ENCODE measurements at regions of chr12 and their contacts with region 1.

Region 1: DNA sequence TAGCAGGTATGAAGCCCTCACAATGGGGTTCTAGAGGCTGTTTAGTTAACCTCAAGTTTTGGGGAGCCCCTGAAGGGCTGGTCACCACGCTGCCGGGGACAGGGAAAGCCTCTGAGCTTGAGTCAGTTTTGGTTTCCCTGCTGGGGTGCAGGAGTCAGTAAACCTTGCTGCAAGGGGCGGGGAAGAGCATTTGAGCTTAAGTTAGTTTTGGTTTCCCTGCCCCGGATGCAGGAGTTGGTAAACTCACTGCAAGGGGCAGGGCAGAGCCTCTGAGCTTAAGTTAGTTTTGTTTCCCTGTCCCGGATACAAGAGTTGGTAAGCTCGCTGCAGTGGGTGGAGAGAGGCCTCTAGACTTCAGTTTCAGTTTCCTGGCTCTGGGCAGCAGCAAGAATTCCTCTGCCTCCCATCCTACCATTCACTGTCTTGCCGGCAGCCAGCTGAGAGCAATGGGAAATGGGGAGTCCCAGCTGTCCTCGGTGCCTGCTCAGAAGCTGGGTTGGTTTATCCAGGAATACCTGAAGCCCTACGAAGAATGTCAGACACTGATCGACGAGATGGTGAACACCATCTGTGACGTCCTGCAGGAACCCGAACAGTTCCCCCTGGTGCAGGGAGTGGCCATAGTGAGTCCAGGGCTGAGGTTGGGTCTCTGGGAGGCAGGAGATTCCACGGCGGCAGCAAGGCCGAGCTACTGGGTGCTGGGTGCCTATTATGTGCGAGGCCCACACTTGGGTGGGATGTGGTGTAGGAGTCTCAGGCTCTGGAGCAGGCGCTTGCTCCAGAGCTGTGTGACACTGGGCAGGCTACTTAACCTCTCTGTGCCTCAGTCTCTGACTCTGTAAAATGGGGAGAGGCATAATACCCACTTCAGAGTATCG is at the start of gene OAS2:
- DNase-seq: peak; percentile 64 to 76 (median 70)
- ATAC-seq: peak; percentile 88 to 97 (median 94)
- H3K4me3 ChIP-seq: peak within 1 kb of the TSS; percentile 19 to 90 (median 64)
- H3K27ac ChIP-seq: peak within 1 kb of the TSS; percentile 54 to 98 (median 87)
- H3K4me1 ChIP-seq: peaks cover 0 to 40% (median 12%) of the 10 kb centered on the region in 12 donors
- H3K27me3 ChIP-seq: no peaks in the 10 kb centered on the region
- CTCF ChIP-seq: no peak
- POLR2A ChIP-seq: peak in 1 of 2 donors; percentile 54
- total RNA-seq, gene OAS2: 6.0 to 46.1 (median 9.8) TPM

Region 2: DNA sequence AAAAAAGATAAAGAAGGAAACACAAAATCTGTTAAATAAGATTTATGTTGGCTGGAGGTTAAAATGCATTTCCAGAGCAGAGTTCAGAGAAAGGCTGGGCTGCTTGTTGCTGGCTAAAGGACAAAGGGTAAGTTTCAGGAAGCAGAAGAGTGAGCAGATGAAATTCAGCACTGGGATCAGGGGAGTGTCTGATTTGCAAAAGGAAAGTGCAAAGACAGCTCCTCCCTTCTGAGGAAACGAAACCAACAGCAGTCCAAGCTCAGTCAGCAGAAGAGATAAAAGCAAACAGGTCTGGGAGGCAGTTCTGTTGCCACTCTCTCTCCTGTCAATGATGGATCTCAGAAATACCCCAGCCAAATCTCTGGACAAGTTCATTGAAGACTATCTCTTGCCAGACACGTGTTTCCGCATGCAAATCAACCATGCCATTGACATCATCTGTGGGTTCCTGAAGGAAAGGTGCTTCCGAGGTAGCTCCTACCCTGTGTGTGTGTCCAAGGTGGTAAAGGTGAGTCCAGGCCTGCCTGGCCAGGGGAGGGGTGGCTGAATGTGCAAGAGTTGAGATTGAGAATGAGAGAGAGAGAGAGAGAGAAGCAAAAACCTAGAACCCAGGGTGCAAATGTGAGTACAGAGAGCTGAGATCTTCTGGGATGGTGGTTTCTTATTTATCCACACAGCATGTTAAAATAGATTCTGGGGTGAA is 71.5 kb before region 1 on chr12 and contains the start of gene OAS1:
- intact Hi-C with region 1: loop called in 2 of 10 experiments (anchors 5 to 10 kb)
- DNase-seq: peak in 3 of 5 donors; percentile 32 to 49 (median 38)
- ATAC-seq: peak; percentile 67 to 91 (median 88)
- H3K4me3 ChIP-seq: peak within 1 kb of the TSS; percentile 18 to 67 (median 57)
- H3K27ac ChIP-seq: peak within 1 kb of the TSS in 11 of 12 donors; percentile 30 to 92 (median 63)
- H3K4me1 ChIP-seq: peaks cover 0 to 61% (median 16%) of the 10 kb centered on the region in 12 donors
- H3K27me3 ChIP-seq: no peaks in the 10 kb centered on the region
- CTCF ChIP-seq: no peak
- POLR2A ChIP-seq: no peak
- total RNA-seq, gene OAS1: 4.1 to 34.8 (median 8.0) TPM

Region 3: DNA sequence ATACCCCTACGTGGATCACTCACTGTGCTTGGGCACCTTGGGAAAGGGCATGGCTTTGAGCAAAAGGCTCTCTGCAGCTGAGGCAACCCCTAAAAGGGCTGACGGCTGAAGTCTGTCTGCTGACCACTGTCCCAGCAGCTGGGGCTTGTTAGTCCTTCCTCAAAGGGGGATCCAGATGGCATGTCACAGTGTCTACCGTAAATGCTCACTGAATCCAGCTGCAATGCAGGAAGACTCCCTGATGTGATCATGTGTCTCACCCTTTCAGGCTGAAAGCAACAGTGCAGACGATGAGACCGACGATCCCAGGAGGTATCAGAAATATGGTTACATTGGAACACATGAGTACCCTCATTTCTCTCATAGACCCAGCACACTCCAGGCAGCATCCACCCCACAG is 59.3 kb before region 1 on chr12:
- intact Hi-C with region 1: no loop called
- DNase-seq: no peak
- ATAC-seq: no peak
- H3K4me3 ChIP-seq: no peak overlapping the region
- H3K27ac ChIP-seq: no peak overlapping the region
- H3K4me1 ChIP-seq: no peaks in the 10 kb centered on the region
- H3K27me3 ChIP-seq: no peaks in the 10 kb centered on the region
- CTCF ChIP-seq: no peak
- POLR2A ChIP-seq: no peak

Region 4: GRCh38 chr12:112992541-112993398 is 14.4 kb after region 1 on chr12:
- intact Hi-C with region 1: no loop called
- DNase-seq: peak in 2 of 5 donors; percentile 50 to 54
- ATAC-seq: peak in 3 of 4 donors; percentile 58 to 70 (median 59)
- H3K4me3 ChIP-seq: no peak overlapping the region
- H3K27ac ChIP-seq: no peak overlapping the region
- H3K4me1 ChIP-seq: peaks cover 0 to 6% (median 0%) of the 10 kb centered on the region in 12 donors
- H3K27me3 ChIP-seq: no peaks in the 10 kb centered on the region
- CTCF ChIP-seq: peak; percentile 63 to 89 (median 82)
- POLR2A ChIP-seq: no peak